ENCODE measurements at regions of chr17 and their contacts with region 1.

Region 1: DNA sequence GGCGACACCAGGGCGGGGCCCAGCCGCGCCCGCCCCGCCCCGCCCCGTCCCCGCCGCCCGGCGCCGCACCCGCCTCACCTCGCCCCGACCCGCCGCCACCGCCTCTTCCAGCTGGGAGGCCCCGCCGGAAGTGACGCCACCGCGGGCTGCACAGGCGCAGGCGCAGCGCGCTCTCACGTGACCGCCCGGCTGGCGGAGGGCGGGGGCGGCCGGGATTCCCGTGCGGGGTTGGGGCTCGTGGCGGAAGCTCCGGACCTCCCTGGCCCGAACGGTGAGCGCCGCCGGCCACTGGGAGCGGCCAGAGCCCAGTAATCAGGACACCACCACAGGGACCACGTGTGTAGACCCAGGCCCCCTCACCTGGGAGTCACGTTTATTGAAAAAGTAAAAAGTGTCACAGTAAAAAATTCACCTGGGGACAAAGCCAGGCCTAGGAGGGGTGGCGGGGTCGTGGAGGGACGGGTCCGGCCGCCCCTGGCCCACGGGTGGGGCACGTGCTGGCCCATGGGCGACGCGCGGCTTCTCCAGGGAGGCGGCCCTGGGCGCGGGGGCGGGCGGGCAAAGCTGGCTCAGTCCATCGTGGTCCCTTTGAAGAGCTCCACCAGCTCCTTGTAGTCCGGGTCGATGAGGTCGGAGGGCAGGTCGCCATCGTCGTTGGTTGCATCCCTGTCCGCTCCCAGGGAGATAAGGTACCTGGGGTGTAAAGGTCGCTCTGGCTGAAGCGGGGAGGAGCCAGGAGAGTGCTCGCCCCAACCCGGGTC is at the start of gene MCRIP1:
- DNase-seq: peak; percentile 91
- H3K4me3 ChIP-seq: peak within 1 kb of the TSS; percentile 59 to 72 (median 68)
- H3K27ac ChIP-seq: peak within 1 kb of the TSS; percentile 74
- H3K4me1 ChIP-seq: peaks cover 11% of the 10 kb centered on the region
- H3K27me3 ChIP-seq: no peaks in the 10 kb centered on the region
- CTCF ChIP-seq: no peak
- POLR2A ChIP-seq: peak; percentile 82
- total RNA-seq, gene MCRIP1: 121 and 129 TPM in 2 replicates

Region 2: GRCh38 chr17:81553018-81553615 is 280.2 kb before region 1 on chr17:
- CTCF ChIA-PET with region 1: no interaction called
- POLR2A ChIA-PET with region 1: no interaction called
- dilution Hi-C with region 1: no loop called
- intact Hi-C with region 1: no loop called
- DNase-seq: peak; percentile 81
- H3K4me3 ChIP-seq: peak overlapping the region; percentile 61 to 93 (median 72)
- H3K27ac ChIP-seq: peak overlapping the region; percentile 79
- H3K4me1 ChIP-seq: peaks cover 46% of the 10 kb centered on the region
- H3K27me3 ChIP-seq: no peaks in the 10 kb centered on the region
- CTCF ChIP-seq: no peak
- POLR2A ChIP-seq: peak; percentile 73

Region 3: GRCh38 chr17:81821603-81822311 is 11.6 kb before region 1 on chr17:
- CTCF ChIA-PET with region 1: interaction called, 20 read pairs
- POLR2A ChIA-PET with region 1: no interaction called
- dilution Hi-C with region 1: no loop called
- intact Hi-C with region 1: no loop called
- DNase-seq: peak; percentile 63
- H3K4me3 ChIP-seq: no peak overlapping the region
- H3K27ac ChIP-seq: no peak overlapping the region
- H3K4me1 ChIP-seq: no peaks in the 10 kb centered on the region
- H3K27me3 ChIP-seq: peaks cover 0 to 2% of the 10 kb centered on the region in 2 experiments
- CTCF ChIP-seq: peak; percentile 57 to 76
- POLR2A ChIP-seq: no peak

Measured in endothelial cell of umbilical vein (primary cell).